Keratinocyte (primary cell): ENCODE measurements at regions of chr7 and their contacts with region 1.

Region 1: DNA sequence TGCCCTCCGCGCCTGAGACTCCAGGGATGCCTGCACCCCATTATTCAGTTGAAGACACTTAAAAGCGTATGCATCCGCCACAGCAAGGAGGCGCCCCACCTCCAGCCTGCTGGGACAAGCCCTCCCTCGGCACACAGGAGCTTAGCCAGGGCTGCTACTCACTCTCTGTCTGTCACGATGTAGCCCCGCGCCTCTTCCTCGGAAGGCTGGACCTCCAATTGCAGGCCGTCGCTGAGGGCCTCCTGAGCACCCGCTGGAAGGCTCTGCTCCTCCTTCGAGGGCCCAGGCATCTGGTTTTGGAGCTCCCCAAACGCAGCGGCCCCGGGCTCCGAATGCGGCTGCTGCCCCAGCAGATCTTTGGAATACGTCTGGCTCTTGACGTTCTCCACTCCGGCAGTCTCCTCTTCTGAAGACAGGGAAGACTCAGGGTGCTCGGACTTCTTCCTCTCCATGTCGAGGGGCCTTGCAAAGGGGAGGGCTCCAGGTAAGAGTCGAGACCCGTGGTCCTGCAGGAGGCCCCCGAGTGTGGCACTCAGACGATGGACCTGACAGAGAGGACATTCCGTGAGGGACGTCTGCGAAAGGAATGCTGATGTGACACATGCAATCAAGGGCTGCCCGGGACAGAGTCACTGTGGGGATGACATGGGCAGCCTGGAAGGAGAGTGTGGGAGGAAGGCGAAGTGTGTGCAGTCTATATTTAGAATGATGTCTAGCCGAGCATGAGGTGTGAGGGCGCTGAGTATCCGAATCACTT is 453.9 kb downstream of the PTPRN2 start:
- DNase-seq: no peak
- H3K4me3 ChIP-seq: no peak overlapping the region
- H3K27ac ChIP-seq: no peak overlapping the region
- H3K4me1 ChIP-seq: no peaks in the 10 kb centered on the region
- H3K27me3 ChIP-seq: no peaks in the 10 kb centered on the region
- CTCF ChIP-seq: no peak

Region 2: GRCh38 chr7:158239290-158239981 is 105.7 kb after region 1 on chr7:
- dilution Hi-C with region 1: loop called (anchors 25 kb)
- DNase-seq: no peak
- H3K4me3 ChIP-seq: no peak overlapping the region
- H3K27ac ChIP-seq: no peak overlapping the region
- H3K4me1 ChIP-seq: no peaks in the 10 kb centered on the region
- H3K27me3 ChIP-seq: no peaks in the 10 kb centered on the region
- CTCF ChIP-seq: no peak